MCF 10A (cell line): ENCODE measurements at regions of chr1 and their contacts with region 1.

Region 1: DNA sequence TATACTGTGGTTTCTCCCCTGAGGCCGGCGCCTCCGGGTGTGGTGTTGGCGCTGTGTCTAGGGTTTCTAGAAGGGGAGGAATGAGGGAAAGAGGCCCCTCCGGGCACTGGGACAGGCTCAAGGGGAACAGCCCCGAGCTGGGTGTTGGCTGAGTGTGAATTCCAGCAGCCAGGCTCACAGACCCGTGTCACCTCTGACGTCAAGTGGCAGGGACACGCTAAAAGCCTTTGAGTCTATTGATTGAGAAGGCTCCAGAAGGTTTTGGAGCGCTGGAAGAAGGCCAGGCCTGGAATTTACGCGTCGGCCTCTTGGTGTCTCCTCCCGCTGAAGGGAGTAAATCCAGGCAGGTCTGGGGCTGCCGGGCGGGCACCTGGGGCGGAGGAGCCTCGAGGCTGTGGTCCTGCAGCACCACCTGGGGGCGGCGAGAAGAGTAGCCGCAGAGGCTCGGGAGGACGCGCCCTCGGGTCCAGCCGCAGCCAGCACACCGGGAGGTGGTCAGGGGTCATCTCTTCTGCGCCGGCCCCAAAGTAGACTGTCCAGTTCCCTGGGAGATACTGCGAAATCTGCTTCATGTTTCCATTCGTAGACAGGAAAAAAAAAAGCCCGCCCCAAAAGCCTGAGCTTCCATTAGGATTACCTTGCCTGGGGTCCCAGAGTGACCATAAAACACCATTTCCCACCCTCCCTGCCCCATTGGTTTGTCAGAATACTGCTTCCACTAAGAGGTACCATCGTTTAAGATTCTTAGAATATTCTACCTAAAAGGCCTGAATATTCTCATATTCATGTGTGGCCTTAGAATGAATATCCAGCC is 61.7 kb downstream of the TLR5 start:
- DNase-seq: peak; percentile 100
- H3K4me3 Mint-ChIP-seq: peak overlapping the region; percentile 59
- H3K27ac Mint-ChIP-seq: peak overlapping the region; percentile 96
- H3K4me1 Mint-ChIP-seq: no peaks in the 10 kb centered on the region
- H3K27me3 Mint-ChIP-seq: peaks cover 33% of the 10 kb centered on the region
- CTCF ChIP-seq: peak; percentile 100

Region 2: GRCh38 chr1:222732216-222733159 is 348.9 kb before region 1 on chr1:
- CTCF ChIA-PET with region 1: interaction called, 28 read pairs
- POLR2A ChIA-PET with region 1: interaction called, 4 read pairs
- intact Hi-C with region 1: no loop called
- DNase-seq: no peak
- H3K4me3 Mint-ChIP-seq: no peak overlapping the region
- H3K27ac Mint-ChIP-seq: no peak overlapping the region
- H3K4me1 Mint-ChIP-seq: no peaks in the 10 kb centered on the region
- H3K27me3 Mint-ChIP-seq: no peaks in the 10 kb centered on the region
- CTCF ChIP-seq: no peak

Region 3: GRCh38 chr1:222754366-222755139 is 326.8 kb before region 1 on chr1:
- CTCF ChIA-PET with region 1: interaction called, 16 read pairs
- POLR2A ChIA-PET with region 1: interaction called, 4 read pairs
- intact Hi-C with region 1: no loop called
- DNase-seq: peak; percentile 98
- H3K4me3 Mint-ChIP-seq: peak overlapping the region; percentile 46
- H3K27ac Mint-ChIP-seq: peak overlapping the region; percentile 86
- H3K4me1 Mint-ChIP-seq: peaks cover 28% of the 10 kb centered on the region
- H3K27me3 Mint-ChIP-seq: no peaks in the 10 kb centered on the region
- CTCF ChIP-seq: no peak

Region 4: DNA sequence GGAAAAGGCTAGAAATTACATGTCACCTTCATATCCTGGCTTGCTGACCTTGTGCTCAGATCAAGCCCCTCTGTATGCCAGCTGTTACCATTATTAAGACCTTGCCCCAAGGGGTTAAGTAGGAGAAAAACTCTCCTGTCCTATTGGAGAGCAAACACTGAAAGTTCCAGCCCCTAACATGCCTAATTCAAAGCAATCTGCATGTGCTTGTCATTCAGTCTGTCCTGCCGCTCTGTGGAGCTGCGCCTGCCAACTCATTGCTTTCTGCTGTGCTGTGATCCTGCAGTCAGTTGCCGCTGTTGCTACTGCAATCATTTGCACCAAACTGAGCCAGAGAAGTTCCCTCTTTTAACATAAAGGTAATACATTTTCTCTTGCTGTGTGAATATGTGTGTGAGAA is 153.2 kb before region 1 on chr1:
- CTCF ChIA-PET with region 1: no interaction called
- POLR2A ChIA-PET with region 1: interaction called, 3 read pairs
- intact Hi-C with region 1: loop called (anchors 5 kb)
- DNase-seq: no peak
- H3K4me3 Mint-ChIP-seq: no peak overlapping the region
- H3K27ac Mint-ChIP-seq: no peak overlapping the region
- H3K4me1 Mint-ChIP-seq: no peaks in the 10 kb centered on the region
- H3K27me3 Mint-ChIP-seq: no peaks in the 10 kb centered on the region
- CTCF ChIP-seq: no peak